ENCODE measurements at regions of chr6 and their contacts with region 1.

Region 1: DNA sequence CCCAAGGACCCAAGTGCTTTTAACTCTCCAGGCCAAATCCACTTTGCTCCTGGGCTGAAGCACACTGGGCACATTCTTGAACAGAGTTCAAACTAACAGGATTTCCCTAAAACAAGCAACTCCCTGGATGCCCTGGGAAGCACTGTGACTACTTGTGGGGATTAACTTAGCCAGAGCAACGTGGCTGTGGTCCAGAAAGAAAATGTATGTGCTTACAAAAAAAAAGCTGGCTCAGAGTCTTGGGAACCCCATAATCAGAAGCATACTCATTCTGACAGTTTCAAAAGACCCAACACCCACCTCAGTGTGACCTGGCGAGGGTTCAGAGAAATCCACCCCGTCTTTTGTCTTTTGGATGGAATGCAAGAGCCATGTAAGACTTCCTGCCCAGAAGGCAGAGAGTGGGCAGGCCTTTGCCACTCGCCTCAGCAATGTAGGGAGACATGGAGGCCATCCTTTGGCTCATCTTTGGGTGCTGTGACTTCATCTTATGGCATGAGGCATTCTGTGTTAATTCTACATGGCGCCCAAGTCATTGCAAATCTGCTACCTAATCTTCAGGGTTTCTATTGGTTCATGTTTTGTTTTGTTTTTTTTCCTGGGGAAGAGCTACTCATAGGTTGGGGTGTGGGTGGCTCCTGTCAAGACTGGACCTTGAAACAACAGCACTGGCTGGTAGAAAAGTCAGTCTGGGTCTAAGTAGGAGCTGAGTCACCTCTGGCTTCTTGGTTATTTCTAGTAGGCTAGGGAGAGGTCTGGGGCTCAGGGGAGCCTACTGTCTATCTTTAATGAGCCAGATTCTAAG is 248.6 kb upstream of the SUPT3H start:
- DNase-seq: no peak
- H3K4me3 Mint-ChIP-seq: peak overlapping the region; percentile 3
- H3K27ac Mint-ChIP-seq: peak overlapping the region; percentile 82
- H3K4me1 Mint-ChIP-seq: peaks cover 39% of the 10 kb centered on the region
- H3K27me3 Mint-ChIP-seq: no peaks in the 10 kb centered on the region

Region 2: DNA sequence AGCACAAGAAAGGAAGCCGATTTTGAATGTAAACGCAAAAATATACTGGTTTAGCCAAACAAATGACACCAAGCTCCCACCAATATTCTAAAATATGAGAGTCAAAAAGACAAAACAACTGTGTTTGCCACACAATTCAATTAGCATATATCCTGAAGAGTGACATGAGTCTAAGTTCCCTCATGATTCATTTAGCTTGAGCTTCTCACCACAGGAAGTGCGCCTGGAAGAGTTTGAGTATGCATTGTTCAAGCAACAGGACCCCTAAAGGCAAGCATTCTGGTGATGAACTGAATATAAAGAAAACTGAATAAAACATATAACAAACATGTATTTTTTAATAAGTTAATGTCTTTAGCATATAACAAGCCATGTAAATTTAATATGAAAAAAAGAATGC is 413.3 kb before region 1 on chr6:
- intact Hi-C with region 1: no loop called
- DNase-seq: no peak
- H3K4me3 Mint-ChIP-seq: no peak overlapping the region
- H3K27ac Mint-ChIP-seq: no peak overlapping the region
- H3K4me1 Mint-ChIP-seq: peaks cover 16% of the 10 kb centered on the region
- H3K27me3 Mint-ChIP-seq: no peaks in the 10 kb centered on the region

Region 3: GRCh38 chr6:45436544-45437438 is 189.5 kb before region 1 on chr6:
- intact Hi-C with region 1: loop called (anchors 2 kb)
- DNase-seq: peak; percentile 75
- H3K4me3 Mint-ChIP-seq: peak overlapping the region; percentile 79
- H3K27ac Mint-ChIP-seq: peak overlapping the region; percentile 91
- H3K4me1 Mint-ChIP-seq: peaks cover 60% of the 10 kb centered on the region
- H3K27me3 Mint-ChIP-seq: no peaks in the 10 kb centered on the region

Region 4: DNA sequence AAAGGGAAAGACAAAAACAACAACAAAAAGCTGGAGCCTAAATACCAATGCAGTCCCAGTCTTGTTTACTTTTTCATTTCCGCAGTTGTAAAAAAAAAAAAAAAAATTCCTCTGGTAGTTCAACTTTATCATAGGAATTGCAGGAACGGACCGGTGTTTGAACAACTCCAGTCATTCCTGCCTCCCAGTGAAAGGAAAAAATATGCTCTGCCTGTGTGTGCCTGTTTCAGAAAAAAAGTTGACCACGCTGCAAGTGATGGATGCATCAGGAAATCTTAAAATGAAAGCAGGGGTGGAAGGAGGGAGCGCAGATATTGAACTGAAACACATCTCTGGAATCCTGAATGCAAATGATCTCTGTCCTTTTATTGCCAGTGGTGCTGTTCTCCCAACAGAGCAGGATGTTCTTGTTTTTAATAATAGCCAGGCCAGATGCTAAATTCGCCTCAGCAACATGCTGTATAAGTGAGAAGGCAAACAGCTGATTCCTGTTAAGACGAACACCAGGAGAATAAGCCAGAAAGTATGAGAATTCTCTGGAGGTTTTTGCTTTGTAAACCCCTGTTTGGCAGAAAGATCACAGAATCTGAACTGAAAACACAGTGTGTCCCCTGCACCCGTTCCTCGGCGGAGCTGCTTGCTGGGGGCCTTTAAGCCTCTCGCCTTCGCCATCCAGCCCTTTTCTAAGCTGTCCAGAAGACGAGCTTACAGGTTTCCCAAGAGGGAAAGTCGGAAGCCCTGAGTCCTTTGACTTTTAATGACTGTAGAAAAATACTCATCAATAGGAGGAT is 70.1 kb before region 1 on chr6:
- intact Hi-C with region 1: loop called (anchors 2 kb)
- DNase-seq: no peak
- H3K4me3 Mint-ChIP-seq: no peak overlapping the region
- H3K27ac Mint-ChIP-seq: no peak overlapping the region
- H3K4me1 Mint-ChIP-seq: peaks cover 41% of the 10 kb centered on the region
- H3K27me3 Mint-ChIP-seq: no peaks in the 10 kb centered on the region

Region 5: DNA sequence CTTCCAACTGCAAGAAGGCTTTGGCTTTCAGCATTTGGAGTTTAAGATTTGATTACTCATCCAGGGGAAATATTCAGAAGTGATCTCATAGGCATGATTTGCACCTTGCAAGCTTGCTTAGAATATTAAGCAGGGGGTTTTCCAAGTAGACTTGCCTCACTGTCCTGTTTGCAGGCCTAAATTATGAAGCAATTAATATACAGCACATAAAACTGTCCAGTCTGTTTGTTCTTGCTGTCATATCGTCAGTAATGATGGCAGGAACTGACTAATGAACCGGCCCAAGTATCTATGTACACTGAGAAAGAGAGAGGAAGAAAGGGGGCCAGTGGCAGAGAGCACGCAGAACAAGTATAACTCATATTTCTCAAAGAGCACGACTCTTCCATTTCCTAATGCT is 36.1 kb before region 1 on chr6:
- intact Hi-C with region 1: loop called (anchors 2 kb)
- DNase-seq: peak; percentile 54
- H3K4me3 Mint-ChIP-seq: no peak overlapping the region
- H3K27ac Mint-ChIP-seq: peak overlapping the region; percentile 57
- H3K4me1 Mint-ChIP-seq: peaks cover 75% of the 10 kb centered on the region
- H3K27me3 Mint-ChIP-seq: no peaks in the 10 kb centered on the region

Region 6: DNA sequence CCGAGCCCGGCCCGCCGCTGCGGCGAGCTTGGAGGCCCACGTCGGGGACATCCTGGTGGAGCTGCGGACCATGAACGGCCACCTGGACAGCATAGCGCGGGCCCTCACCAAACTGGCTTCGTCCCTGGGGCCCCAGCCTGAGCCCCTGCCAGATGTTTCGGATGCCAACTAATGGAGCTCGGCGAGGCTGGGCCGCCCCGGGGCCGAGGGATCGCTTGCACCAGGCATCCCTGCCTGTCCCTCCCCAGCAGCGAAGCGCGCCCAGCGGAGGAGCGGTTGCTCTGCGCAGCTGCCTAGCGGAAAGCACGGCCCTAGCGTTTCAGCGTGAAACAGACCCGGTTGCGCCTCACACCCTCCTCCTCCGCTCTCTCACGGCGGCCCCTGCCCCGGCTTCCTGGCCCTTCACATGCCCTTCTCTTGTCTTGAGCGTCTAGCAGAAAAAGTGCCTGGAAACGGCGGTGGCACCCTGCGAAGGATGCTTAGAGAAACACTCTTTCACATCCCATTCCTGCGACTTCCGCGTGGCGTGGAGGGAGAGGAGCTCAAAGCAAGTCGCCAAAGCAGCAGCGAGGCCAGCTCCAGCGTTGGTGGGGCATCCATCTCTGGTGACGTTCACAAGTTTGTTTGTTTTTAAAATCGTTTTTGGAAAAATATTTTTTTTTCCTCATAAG is 37.4 kb after region 1 on chr6:
- intact Hi-C with region 1: loop called (anchors 5 kb)
- DNase-seq: peak; percentile 82
- H3K4me3 Mint-ChIP-seq: peak overlapping the region; percentile 66
- H3K27ac Mint-ChIP-seq: no peak overlapping the region
- H3K4me1 Mint-ChIP-seq: peaks cover 35% of the 10 kb centered on the region
- H3K27me3 Mint-ChIP-seq: peaks cover 22% of the 10 kb centered on the region

Region 7: DNA sequence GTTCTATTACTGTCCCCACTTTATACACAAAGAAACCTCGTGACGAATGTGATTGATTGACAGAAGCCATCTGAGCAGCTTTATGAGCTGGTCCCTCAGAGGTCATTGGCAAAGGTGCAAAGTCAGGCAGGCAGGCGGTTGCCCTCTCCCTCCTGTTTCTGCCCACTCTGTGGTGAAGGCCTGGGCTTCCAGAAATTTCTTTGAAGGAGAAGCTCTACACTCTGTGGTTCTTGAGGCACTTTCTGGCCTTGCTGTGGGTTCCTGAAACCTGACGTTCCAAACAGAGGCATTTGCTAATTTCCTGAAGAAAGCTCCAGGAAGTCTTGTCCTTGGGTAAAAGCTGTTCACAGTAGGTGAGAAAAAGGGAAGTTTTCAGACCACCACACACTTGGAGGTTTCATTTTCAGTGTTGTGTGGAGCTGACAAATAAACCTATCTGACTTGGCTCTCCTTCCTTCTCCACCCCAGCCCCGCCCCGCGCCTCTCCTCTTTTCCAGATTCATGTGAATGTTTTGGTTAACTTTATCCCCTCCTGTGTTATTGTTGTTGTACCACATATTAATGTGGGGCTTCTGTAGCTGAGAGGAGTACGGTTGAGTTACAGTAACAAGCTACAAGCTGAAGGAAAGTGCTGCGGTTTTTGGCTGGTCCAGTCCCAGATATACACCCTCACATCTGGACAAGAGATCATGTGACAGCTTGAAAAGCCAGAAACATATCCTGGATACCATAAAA is 115.3 kb after region 1 on chr6:
- intact Hi-C with region 1: no loop called
- DNase-seq: peak; percentile 67
- H3K4me3 Mint-ChIP-seq: peak overlapping the region; percentile 16
- H3K27ac Mint-ChIP-seq: peak overlapping the region; percentile 60
- H3K4me1 Mint-ChIP-seq: peaks cover 41% of the 10 kb centered on the region
- H3K27me3 Mint-ChIP-seq: no peaks in the 10 kb centered on the region

Measured in activated CD4-positive, alpha-beta T cell treated with anti-CD3 and anti-CD28 coated beads, Interleukin-2, amount 10 ng/mL, durations not matched to agents 24 days and 14 days (primary cell).